ENCODE measurements at regions of chr2 and their contacts with region 1.

Region 1: DNA sequence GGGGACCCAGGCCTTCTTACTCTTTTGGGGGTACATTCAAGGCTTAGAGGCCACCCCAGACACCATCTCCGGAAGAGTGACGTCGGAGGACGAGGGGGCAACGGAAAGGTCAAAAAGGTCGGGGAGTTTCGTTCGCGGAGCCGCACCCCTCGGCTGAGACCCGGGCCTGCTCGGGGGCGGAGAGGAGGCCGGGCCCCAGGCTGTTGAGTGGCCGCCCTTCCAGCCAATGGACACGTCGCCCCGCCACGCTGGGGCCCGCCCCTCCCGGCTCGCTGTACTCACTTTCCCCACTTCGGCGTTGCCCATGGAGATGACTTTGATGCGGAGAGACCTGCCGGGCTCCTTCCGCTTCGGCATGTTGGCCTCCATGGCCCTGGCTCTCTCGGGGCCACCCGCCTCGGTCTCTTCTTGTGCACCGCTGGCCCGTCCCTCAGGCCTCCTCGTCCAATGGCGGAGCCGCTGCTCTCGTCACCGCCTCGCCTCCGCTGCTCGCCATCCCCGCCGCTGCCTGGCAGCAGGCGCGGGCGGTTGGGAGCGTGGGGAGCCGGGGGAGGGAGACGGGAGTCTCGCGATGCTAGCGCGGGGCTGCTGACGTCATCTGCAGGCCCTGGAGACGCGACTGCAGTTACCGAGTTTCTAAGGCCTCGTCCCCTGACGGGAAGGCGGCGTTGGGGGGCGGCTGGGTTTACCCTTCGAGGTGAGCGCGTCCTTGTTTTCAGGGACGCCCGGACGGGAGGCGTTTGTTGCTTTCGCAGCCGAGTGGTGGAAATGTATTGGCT is at the start of gene DNAJC27:
- DNase-seq: peak; percentile 99
- ATAC-seq: peak; percentile 91
- H3K4me3 Mint-ChIP-seq: peak within 1 kb of the TSS; percentile 86
- H3K27ac Mint-ChIP-seq: peak within 1 kb of the TSS; percentile 99
- H3K4me1 Mint-ChIP-seq: peaks cover 17% of the 10 kb centered on the region
- H3K27me3 Mint-ChIP-seq: no peaks in the 10 kb centered on the region
- total RNA-seq, gene DNAJC27: 5.9 to 6.6 TPM

Region 2: DNA sequence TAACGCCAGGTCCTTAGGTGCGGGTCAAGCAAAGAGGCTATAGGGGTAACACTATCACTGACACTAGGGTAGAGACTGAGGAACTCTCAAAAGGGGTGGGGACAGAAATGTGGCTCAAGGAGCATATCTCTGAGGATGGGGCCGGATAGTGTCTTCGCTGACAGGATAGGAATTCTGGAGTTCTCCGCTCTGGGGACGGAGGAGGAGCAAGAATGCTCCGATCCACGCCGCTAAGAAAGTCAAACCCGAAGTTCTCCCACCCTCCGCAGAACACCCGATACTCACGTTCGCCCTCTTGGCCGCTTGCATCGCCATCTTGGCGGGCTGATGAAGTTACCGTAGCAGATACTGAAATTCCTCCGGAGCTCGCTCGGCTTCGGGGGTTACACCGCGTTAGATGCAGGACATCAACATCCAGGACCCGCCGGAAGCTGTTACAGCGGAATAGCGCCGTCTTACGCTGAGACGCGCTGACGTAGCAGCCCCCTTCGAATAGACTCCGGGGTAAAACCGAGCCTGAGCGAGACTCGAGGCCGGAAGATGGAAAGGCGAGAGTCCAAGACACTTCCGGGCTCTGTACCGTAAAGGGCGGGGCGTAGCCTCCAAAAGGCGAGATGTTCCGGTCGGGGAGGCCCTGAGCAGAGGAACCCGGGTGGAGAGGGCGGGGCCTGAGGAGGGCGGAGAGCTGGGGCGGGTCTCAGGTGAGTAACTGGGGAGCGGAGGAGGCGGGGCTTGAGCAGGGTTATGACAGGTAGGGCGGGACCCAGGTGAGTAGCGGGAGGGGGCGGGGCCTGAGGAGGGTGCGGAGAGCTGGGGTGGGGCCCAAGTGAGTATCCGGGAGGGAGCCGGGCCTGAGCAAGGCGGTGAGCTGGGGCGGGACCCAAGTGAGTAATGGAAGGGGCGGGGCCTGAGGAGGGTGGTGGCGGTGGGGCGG is 895.5 kb before region 1 on chr2 and contains the start of gene SF3B6:
- CTCF ChIA-PET with region 1: no interaction called
- POLR2A ChIA-PET with region 1: no interaction called
- intact Hi-C with region 1: loop called in 1 of 2 experiments (anchors 1 kb)
- DNase-seq: peak; percentile 100
- ATAC-seq: peak; percentile 91
- H3K4me3 Mint-ChIP-seq: peak within 1 kb of the TSS; percentile 99
- H3K27ac Mint-ChIP-seq: peak within 1 kb of the TSS; percentile 99
- H3K4me1 Mint-ChIP-seq: peaks cover 43% of the 10 kb centered on the region
- H3K27me3 Mint-ChIP-seq: no peaks in the 10 kb centered on the region
- total RNA-seq, gene SF3B6: 128 to 143 TPM

Region 3: GRCh38 chr2:24421668-24422067 is 550.1 kb before region 1 on chr2:
- CTCF ChIA-PET with region 1: no interaction called
- POLR2A ChIA-PET with region 1: no interaction called
- intact Hi-C with region 1: no loop called
- DNase-seq: peak; percentile 80
- ATAC-seq: peak; percentile 81
- H3K4me3 Mint-ChIP-seq: no peak overlapping the region
- H3K27ac Mint-ChIP-seq: no peak overlapping the region
- H3K4me1 Mint-ChIP-seq: no peaks in the 10 kb centered on the region
- H3K27me3 Mint-ChIP-seq: no peaks in the 10 kb centered on the region

Region 4: GRCh38 chr2:24792874-24793760 is 178.6 kb before region 1 on chr2 and contains the starts of genes CENPO and PTRHD1:
- CTCF ChIA-PET with region 1: interaction called, 3 read pairs
- POLR2A ChIA-PET with region 1: no interaction called
- intact Hi-C with region 1: loop called in 1 of 2 experiments (anchors 1 kb)
- DNase-seq: peak; percentile 97
- ATAC-seq: peak; percentile 98
- H3K4me3 Mint-ChIP-seq: peak within 1 kb of the TSS; percentile 97
- H3K27ac Mint-ChIP-seq: peak within 1 kb of the TSS; percentile 100
- H3K4me1 Mint-ChIP-seq: peaks cover 30% of the 10 kb centered on the region
- H3K27me3 Mint-ChIP-seq: no peaks in the 10 kb centered on the region
- total RNA-seq, gene CENPO: 42.4 to 42.7 TPM
- total RNA-seq, gene PTRHD1: 22.3 to 26.5 TPM

Region 5: DNA sequence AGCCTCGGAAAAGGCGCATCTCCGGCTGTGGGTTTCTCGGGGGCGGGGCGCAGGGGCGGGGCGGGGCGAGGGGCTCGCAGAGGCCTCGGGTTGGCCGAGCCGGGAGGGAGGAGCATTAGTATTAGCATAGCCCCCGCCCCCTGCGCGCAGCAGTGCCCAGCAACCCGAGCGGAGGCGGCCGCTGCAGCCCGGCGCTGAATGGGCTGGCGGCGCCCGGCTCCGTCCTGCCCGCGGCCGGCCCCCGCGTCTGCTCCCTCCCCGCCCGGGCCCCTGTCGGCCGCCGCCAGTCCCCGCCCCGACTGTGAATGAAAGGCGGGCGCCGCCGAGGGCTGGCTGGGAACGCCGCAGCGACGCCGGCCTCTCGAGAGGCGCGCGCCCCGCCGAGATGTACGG is 70.2 kb after region 1 on chr2 and contains the start of gene EFR3B:
- CTCF ChIA-PET with region 1: interaction called, 10 read pairs
- POLR2A ChIA-PET with region 1: interaction called, 4 read pairs
- intact Hi-C with region 1: loop called (anchors 1 kb)
- DNase-seq: peak; percentile 93
- ATAC-seq: peak; percentile 84
- H3K4me3 Mint-ChIP-seq: peak within 1 kb of the TSS; percentile 71
- H3K27ac Mint-ChIP-seq: no peak within 1 kb of the TSS
- H3K4me1 Mint-ChIP-seq: peaks cover 32% of the 10 kb centered on the region
- H3K27me3 Mint-ChIP-seq: peaks cover 38% of the 10 kb centered on the region
- total RNA-seq, gene EFR3B: 1.0 to 1.1 TPM

Region 6: GRCh38 chr2:25201265-25201664 is 229.5 kb after region 1 on chr2:
- CTCF ChIA-PET with region 1: interaction called, 34 read pairs
- POLR2A ChIA-PET with region 1: no interaction called
- intact Hi-C with region 1: loop called (anchors 1 kb)
- DNase-seq: no peak
- ATAC-seq: no peak
- H3K4me3 Mint-ChIP-seq: no peak overlapping the region
- H3K27ac Mint-ChIP-seq: no peak overlapping the region
- H3K4me1 Mint-ChIP-seq: peaks cover 9% of the 10 kb centered on the region
- H3K27me3 Mint-ChIP-seq: no peaks in the 10 kb centered on the region

Region 7: DNA sequence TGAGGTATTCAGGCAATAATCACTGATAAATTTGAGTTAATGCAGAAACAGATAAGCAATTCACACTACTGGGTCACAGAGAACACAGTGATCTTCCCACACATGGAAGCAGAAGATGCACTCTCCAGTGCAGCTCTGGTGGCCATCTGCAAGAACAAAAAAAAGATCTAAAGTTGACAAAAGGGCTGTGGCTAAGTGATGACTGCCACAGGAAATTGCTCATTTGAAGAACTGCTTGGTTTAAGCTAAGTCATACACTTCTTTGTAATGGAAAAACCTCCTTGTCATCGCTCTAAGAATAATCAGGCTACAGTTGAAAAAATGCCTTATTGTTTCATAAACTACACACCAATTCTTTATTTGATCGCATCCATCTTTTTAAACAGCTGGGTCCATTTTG is 586.5 kb after region 1 on chr2:
- CTCF ChIA-PET with region 1: no interaction called
- POLR2A ChIA-PET with region 1: no interaction called
- intact Hi-C with region 1: loop called in 1 of 2 experiments (anchors 5 kb)
- DNase-seq: peak; percentile 67
- ATAC-seq: peak; percentile 88
- H3K4me3 Mint-ChIP-seq: no peak overlapping the region
- H3K27ac Mint-ChIP-seq: peak overlapping the region; percentile 74
- H3K4me1 Mint-ChIP-seq: peaks cover 60% of the 10 kb centered on the region
- H3K27me3 Mint-ChIP-seq: no peaks in the 10 kb centered on the region

Measured in activated CD4-positive, alpha-beta T cell treated with anti-CD3 and anti-CD28 coated beads for 36 hours (primary cell).